ENCODE measurements at regions of chr12 and their contacts with region 1.

Region 1: GRCh38 chr12:94545935-94546771 is 86.5 kb upstream of the CEP83 start:
- DNase-seq: peak; percentile 60 to 85
- H3K4me3 ChIP-seq: no peak overlapping the region
- H3K27ac ChIP-seq: no peak overlapping the region
- H3K4me1 ChIP-seq: no peaks in the 10 kb centered on the region
- H3K27me3 ChIP-seq: no peaks in the 10 kb centered on the region
- CTCF ChIP-seq: peak in 5 of 7 experiments; percentile 68 to 86 (median 78)
- EP300 ChIP-seq: no peak
- POLR2A ChIP-seq: no peak

Region 2: GRCh38 chr12:94469522-94469921 is 76.6 kb before region 1 on chr12:
- intact Hi-C with region 1: no loop called
- DNase-seq: no peak
- H3K4me3 ChIP-seq: no peak overlapping the region
- H3K27ac ChIP-seq: no peak overlapping the region
- H3K4me1 ChIP-seq: no peaks in the 10 kb centered on the region
- H3K27me3 ChIP-seq: no peaks in the 10 kb centered on the region
- CTCF ChIP-seq: no peak
- EP300 ChIP-seq: no peak
- POLR2A ChIP-seq: no peak

Region 3: DNA sequence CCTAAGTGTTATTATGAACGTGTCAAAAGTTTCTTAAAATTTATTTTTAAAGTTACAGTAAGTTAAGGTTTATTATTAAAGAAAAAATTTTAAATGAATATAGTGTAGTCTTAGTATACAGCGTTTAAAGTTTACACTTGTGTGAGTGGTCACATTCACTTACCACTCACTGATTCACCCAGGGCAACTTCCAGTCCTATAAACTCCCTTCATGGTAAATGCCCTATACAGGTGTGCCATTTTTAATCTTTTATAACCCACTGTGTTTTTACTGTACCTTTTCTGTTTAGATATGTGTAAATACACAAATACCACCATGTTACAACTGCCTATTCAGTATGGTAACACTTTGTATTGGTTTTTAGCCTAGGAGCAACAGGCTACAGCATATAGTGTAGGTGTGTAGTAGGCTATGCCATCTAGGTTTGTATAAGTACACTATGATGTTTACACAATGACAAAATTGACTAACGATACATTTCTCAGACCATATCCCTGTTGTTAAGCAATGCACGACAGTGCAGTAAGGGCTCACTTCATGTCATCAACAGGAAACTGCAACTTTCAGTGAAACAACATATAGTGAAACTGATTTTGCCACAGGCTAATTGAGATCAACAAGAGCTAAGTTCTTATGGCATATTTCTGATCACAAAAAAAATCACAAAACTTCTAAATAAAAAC is 216.2 kb after region 1 on chr12:
- intact Hi-C with region 1: loop called (anchors 10 kb)
- DNase-seq: peak in 1 of 2 donors; percentile 47
- H3K4me3 ChIP-seq: no peak overlapping the region
- H3K27ac ChIP-seq: no peak overlapping the region
- H3K4me1 ChIP-seq: peaks cover 0 to 19% (median 10%) of the 10 kb centered on the region in 4 donors
- H3K27me3 ChIP-seq: no peaks in the 10 kb centered on the region
- CTCF ChIP-seq: no peak
- EP300 ChIP-seq: no peak
- POLR2A ChIP-seq: no peak